ENCODE measurements at regions of chr16 and their contacts with region 1.

Region 1: DNA sequence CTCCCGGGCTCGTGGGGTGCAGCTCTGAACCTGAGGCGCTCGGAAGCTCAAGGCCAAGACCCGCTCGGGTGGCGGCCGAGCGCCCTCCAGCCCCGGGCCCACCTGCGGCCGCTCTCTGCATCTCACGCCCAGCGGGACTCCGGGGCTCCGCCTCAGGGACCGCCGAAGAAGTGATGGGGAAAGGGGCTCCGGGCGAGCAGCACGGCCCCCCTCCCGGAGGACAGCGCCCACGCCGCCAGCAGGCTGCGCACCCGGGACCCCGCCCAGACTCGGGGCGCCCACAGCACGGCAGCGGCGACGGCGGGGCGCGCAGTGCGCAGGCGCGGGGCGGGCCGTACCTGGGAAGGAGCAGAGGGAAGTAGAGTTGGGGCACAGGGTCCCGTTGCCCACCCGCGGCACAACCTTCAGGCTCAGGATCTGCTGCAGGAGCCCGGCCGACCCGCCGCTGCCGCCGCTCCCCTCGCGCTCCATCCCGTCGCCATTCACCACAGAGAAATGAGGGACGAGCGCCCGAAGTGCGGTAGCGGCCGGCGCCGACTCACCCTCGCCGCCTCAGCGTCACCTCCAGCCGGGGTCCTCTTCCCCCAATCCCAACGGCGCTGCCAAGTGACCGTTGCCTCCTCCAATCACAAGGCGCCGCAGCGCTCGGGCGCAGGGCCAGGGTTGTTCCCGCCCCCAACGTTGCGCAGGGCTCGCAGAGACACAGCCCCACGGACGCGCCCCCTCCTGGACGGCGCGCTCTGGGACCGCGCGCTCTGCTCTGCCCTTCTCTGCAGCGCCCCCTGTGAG is at the start of gene TMEM170A:
- DNase-seq: peak; percentile 96 to 99 (median 99)
- ATAC-seq: peak; percentile 95
- H3K4me3 ChIP-seq: peak within 1 kb of the TSS; percentile 93
- H3K4me3 Mint-ChIP-seq: peak within 1 kb of the TSS; percentile 86 to 98 (median 93)
- H3K27ac ChIP-seq: peak within 1 kb of the TSS; percentile 93
- H3K27ac Mint-ChIP-seq: peak within 1 kb of the TSS; percentile 75 to 97 (median 93)
- H3K4me1 ChIP-seq: peaks cover 26 to 31% of the 10 kb centered on the region in 2 donors
- H3K4me1 Mint-ChIP-seq: peaks cover 31 to 49% (median 44%) of the 10 kb centered on the region in 7 donors
- H3K27me3 ChIP-seq: no peaks in the 10 kb centered on the region
- H3K27me3 Mint-ChIP-seq: peaks cover 0 to 5% (median 0%) of the 10 kb centered on the region in 5 donors
- total RNA-seq, gene TMEM170A: 31.0 to 50.9 (median 46.6) TPM

Region 2: GRCh38 chr16:74666425-74667254 is 797.7 kb before region 1 on chr16 and contains the start of gene RFWD3:
- CTCF ChIA-PET with region 1: no interaction called
- POLR2A ChIA-PET with region 1: no interaction called
- intact Hi-C with region 1: no loop called
- DNase-seq: peak; percentile 80 to 99 (median 97)
- ATAC-seq: peak; percentile 100
- H3K4me3 ChIP-seq: peak within 1 kb of the TSS; percentile 89
- H3K4me3 Mint-ChIP-seq: peak within 1 kb of the TSS; percentile 87 to 98 (median 95)
- H3K27ac ChIP-seq: peak within 1 kb of the TSS; percentile 86
- H3K27ac Mint-ChIP-seq: peak within 1 kb of the TSS; percentile 92 to 97 (median 95)
- H3K4me1 ChIP-seq: peaks cover 0 to 10% of the 10 kb centered on the region in 2 donors
- H3K4me1 Mint-ChIP-seq: peaks cover 26 to 48% (median 44%) of the 10 kb centered on the region in 7 donors
- H3K27me3 ChIP-seq: no peaks in the 10 kb centered on the region
- H3K27me3 Mint-ChIP-seq: peaks cover 0 to 2% (median 0%) of the 10 kb centered on the region in 5 donors
- total RNA-seq, gene RFWD3: 39.3 to 88.0 (median 56.9) TPM

Region 3: DNA sequence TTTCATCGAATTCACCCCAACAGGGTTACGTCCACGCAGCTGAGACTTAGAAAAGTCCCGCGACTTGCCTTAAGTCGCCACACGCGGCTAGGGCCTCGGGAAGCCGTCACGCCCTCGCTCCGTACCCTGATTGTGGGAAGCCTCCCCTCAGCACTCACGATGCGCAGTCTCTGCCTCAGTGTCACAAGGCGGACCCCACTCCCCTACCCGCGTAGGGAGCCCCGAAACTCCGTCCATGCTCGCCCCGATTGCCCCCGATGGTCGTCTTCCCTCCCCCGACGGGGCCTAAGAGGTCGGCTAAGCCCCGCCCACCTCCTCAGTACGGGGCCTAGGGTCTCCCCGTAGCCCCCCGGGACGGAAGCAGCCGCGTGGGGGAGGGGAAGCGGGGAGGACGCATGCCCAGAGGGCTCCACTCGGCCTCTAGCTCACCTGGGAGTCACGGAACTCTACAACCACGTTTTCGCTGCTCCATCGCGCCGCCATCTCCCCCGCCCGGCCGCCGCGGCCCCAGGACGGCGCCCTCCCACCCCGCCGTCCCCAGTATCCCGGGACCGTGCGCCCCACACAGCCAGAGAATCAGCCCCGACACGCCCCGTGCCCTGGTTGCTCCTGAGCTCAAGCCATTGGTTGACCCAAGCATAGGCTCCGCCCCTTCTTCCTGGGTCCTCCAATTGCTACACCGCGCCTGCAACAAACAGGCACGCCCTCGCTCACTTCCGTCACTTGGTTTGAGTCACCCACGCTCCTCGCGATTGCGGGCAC is 479.6 kb before region 1 on chr16 and contains the start of gene WDR59:
- CTCF ChIA-PET with region 1: no interaction called
- POLR2A ChIA-PET with region 1: no interaction called
- intact Hi-C with region 1: loop called in 1 of 2 experiments (anchors 10 kb)
- DNase-seq: peak; percentile 87 to 99 (median 98)
- ATAC-seq: peak; percentile 100
- H3K4me3 ChIP-seq: peak within 1 kb of the TSS; percentile 98
- H3K4me3 Mint-ChIP-seq: peak within 1 kb of the TSS; percentile 90 to 98 (median 95)
- H3K27ac ChIP-seq: peak within 1 kb of the TSS; percentile 86
- H3K27ac Mint-ChIP-seq: peak within 1 kb of the TSS; percentile 72 to 96 (median 92)
- H3K4me1 ChIP-seq: peaks cover 5 to 6% of the 10 kb centered on the region in 2 donors
- H3K4me1 Mint-ChIP-seq: peaks cover 0 to 27% (median 23%) of the 10 kb centered on the region in 7 donors
- H3K27me3 ChIP-seq: no peaks in the 10 kb centered on the region
- H3K27me3 Mint-ChIP-seq: no peaks in the 10 kb centered on the region
- total RNA-seq, gene WDR59: 82.7 to 130 (median 84.7) TPM

Region 4: GRCh38 chr16:75319513-75320411 is 144.6 kb before region 1 on chr16:
- CTCF ChIA-PET with region 1: no interaction called
- POLR2A ChIA-PET with region 1: no interaction called
- intact Hi-C with region 1: no loop called
- DNase-seq: peak in 6 of 9 donors; percentile 8 to 48 (median 28)
- ATAC-seq: peak; percentile 42
- H3K4me3 ChIP-seq: peak overlapping the region; percentile 52
- H3K4me3 Mint-ChIP-seq: peak overlapping the region; percentile 51 to 81 (median 75)
- H3K27ac ChIP-seq: no peak overlapping the region
- H3K27ac Mint-ChIP-seq: peak overlapping the region in 4 of 9 donors; percentile 38 to 64 (median 56)
- H3K4me1 ChIP-seq: peaks cover 18 to 19% of the 10 kb centered on the region in 2 donors
- H3K4me1 Mint-ChIP-seq: peaks cover 21 to 41% (median 32%) of the 10 kb centered on the region in 7 donors
- H3K27me3 ChIP-seq: no peaks in the 10 kb centered on the region
- H3K27me3 Mint-ChIP-seq: peaks cover 0 to 31% (median 10%) of the 10 kb centered on the region in 5 donors

Region 5: GRCh38 chr16:75402821-75403475 is 61.4 kb before region 1 on chr16:
- CTCF ChIA-PET with region 1: no interaction called
- POLR2A ChIA-PET with region 1: interaction called, 10 read pairs
- intact Hi-C with region 1: no loop called
- DNase-seq: peak in 5 of 9 donors; percentile 20 to 45 (median 31)
- ATAC-seq: peak; percentile 69
- H3K4me3 ChIP-seq: no peak overlapping the region
- H3K4me3 Mint-ChIP-seq: no peak overlapping the region
- H3K27ac ChIP-seq: no peak overlapping the region
- H3K27ac Mint-ChIP-seq: peak overlapping the region in 1 of 9 donors; percentile 47
- H3K4me1 ChIP-seq: no peaks in the 10 kb centered on the region
- H3K4me1 Mint-ChIP-seq: peaks cover 0 to 6% (median 0%) of the 10 kb centered on the region in 7 donors
- H3K27me3 ChIP-seq: no peaks in the 10 kb centered on the region
- H3K27me3 Mint-ChIP-seq: no peaks in the 10 kb centered on the region

Region 6: GRCh38 chr16:75519881-75520280 is 55.6 kb after region 1 on chr16:
- CTCF ChIA-PET with region 1: interaction called, 3 read pairs
- POLR2A ChIA-PET with region 1: interaction called, 4 read pairs
- intact Hi-C with region 1: loop called (anchors 1 kb)
- DNase-seq: no peak
- ATAC-seq: no peak
- H3K4me3 ChIP-seq: no peak overlapping the region
- H3K4me3 Mint-ChIP-seq: no peak overlapping the region
- H3K27ac ChIP-seq: no peak overlapping the region
- H3K27ac Mint-ChIP-seq: no peak overlapping the region
- H3K4me1 ChIP-seq: peaks cover 0 to 3% of the 10 kb centered on the region in 2 donors
- H3K4me1 Mint-ChIP-seq: peaks cover 5 to 17% (median 13%) of the 10 kb centered on the region in 7 donors
- H3K27me3 ChIP-seq: no peaks in the 10 kb centered on the region
- H3K27me3 Mint-ChIP-seq: peaks cover 0 to 9% (median 0%) of the 10 kb centered on the region in 5 donors

Region 7: GRCh38 chr16:75622761-75623605 is 158.7 kb after region 1 on chr16 and contains the start of gene ADAT1:
- CTCF ChIA-PET with region 1: no interaction called
- POLR2A ChIA-PET with region 1: interaction called, 3 read pairs
- intact Hi-C with region 1: loop called (anchors 1 to 2 kb)
- DNase-seq: peak; percentile 91 to 99 (median 97)
- ATAC-seq: peak; percentile 97
- H3K4me3 ChIP-seq: peak within 1 kb of the TSS; percentile 80
- H3K4me3 Mint-ChIP-seq: peak within 1 kb of the TSS; percentile 91 to 99 (median 96)
- H3K27ac ChIP-seq: peak within 1 kb of the TSS; percentile 93
- H3K27ac Mint-ChIP-seq: peak within 1 kb of the TSS; percentile 92 to 99 (median 97)
- H3K4me1 ChIP-seq: peaks cover 30 to 49% of the 10 kb centered on the region in 2 donors
- H3K4me1 Mint-ChIP-seq: peaks cover 29 to 76% (median 52%) of the 10 kb centered on the region in 7 donors
- H3K27me3 ChIP-seq: no peaks in the 10 kb centered on the region
- H3K27me3 Mint-ChIP-seq: no peaks in the 10 kb centered on the region
- total RNA-seq, gene ADAT1: 41.3 to 69.4 (median 63.6) TPM